ENCODE measurements at regions of chr4 and their contacts with region 1.

Region 1: DNA sequence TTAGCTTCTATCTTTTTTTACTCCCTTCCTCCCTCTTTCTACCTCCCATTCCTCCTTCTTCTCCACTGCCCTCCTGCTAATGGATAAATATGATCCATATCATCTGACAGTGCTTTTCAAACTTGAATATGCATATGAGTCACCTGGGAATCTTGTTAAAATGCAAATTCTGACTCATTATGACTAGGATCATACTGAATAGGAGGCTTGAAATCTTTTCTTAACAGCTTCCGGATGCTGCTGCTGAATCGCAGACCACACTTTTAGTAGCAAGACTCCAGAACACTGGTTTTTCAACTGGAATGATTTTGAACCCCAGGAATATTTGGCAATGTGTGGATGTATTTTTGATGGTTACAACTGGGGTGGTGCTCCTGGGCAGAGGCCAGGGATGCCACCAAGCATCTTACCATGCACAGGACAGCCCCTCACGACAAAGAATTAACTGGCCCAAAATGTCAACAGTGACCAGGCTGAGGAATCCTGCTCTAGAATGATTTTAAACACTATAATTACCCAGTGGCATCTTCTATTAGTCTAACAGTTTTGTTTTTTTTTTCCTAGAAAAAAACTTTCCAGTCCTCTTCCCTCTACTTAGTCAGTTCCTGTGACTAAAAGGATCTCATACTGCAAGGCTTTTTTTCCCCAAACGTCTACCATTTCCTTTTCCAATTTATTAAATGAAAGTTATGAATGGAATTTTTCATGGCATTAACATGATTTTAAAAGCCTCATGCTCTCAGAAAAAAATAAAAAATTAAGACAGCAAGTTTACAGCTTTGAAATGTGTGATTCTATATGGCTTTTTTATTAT is 10.6 kb upstream of the PYURF start:
- DNase-seq: no peak
- H3K4me3 ChIP-seq: no peak overlapping the region
- H3K27ac ChIP-seq: no peak overlapping the region
- H3K4me1 ChIP-seq: peaks cover 0 to 6% (median under 1%) of the 10 kb centered on the region in 4 donors
- H3K27me3 ChIP-seq: no peaks in the 10 kb centered on the region
- CTCF ChIP-seq: no peak
- EP300 ChIP-seq: no peak
- POLR2A ChIP-seq: no peak

Region 2: GRCh38 chr4:88341227-88342192 is 192.6 kb before region 1 on chr4:
- intact Hi-C with region 1: no loop called
- DNase-seq: no peak
- H3K4me3 ChIP-seq: no peak overlapping the region
- H3K27ac ChIP-seq: peak overlapping the region; percentile 34 to 57 (median 43)
- H3K4me1 ChIP-seq: peaks cover 11 to 22% (median 16%) of the 10 kb centered on the region in 4 donors
- H3K27me3 ChIP-seq: no peaks in the 10 kb centered on the region
- CTCF ChIP-seq: no peak
- EP300 ChIP-seq: no peak
- POLR2A ChIP-seq: no peak

Region 3: DNA sequence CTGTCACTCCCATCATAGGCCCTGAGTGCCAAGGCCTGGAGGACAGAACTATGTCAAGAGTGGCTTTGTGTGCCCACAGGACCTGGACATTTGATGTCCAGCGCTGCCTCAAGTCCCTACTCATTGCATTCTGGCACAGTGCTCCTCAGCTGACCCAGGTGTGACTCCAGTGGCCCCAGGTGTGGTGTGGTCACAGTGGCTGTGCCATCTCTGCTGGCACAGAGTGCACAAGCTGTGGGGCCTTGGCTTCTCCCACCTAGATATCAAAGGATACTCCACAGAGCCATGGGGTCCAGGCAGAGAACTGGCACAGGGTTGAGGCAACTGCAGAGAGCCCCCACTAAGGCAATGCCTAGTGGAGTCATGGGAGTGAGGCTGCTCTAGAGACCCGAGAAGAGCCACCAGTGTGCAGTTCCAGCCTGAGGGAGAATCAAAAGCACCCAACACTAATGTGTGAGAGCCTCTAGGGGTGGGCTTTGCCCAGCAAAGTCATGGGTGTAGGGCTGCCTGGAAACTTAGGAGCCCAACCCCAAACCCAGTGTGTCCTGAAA is 36.2 kb before region 1 on chr4:
- intact Hi-C with region 1: no loop called
- DNase-seq: no peak
- H3K4me3 ChIP-seq: no peak overlapping the region
- H3K27ac ChIP-seq: no peak overlapping the region
- H3K4me1 ChIP-seq: no peaks in the 10 kb centered on the region
- H3K27me3 ChIP-seq: no peaks in the 10 kb centered on the region
- CTCF ChIP-seq: no peak
- EP300 ChIP-seq: no peak
- POLR2A ChIP-seq: no peak

Region 4: DNA sequence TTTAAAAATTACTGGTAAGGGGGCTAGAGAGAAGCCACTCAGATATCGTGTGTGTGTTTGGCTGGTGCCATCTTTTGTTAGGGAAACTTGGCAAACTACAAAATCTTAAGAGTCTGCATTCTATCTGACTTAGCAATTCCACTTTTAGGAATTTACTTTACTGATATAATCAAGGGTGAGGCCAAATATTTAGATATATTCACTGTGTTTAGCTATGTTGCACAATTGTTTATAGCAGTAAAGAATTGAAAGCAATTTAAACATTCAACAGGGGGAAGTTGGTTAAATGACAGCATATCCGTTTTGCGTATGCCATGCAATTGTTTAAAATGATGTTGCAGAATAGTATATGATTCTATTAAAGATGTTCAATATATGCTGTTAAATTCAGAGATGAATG is 51.8 kb after region 1 on chr4:
- intact Hi-C with region 1: loop called (anchors 5 kb)
- DNase-seq: no peak
- H3K4me3 ChIP-seq: no peak overlapping the region
- H3K27ac ChIP-seq: no peak overlapping the region
- H3K4me1 ChIP-seq: peaks cover 3 to 18% (median 8%) of the 10 kb centered on the region in 4 donors
- H3K27me3 ChIP-seq: no peaks in the 10 kb centered on the region
- CTCF ChIP-seq: no peak
- EP300 ChIP-seq: no peak
- POLR2A ChIP-seq: no peak

Region 5: DNA sequence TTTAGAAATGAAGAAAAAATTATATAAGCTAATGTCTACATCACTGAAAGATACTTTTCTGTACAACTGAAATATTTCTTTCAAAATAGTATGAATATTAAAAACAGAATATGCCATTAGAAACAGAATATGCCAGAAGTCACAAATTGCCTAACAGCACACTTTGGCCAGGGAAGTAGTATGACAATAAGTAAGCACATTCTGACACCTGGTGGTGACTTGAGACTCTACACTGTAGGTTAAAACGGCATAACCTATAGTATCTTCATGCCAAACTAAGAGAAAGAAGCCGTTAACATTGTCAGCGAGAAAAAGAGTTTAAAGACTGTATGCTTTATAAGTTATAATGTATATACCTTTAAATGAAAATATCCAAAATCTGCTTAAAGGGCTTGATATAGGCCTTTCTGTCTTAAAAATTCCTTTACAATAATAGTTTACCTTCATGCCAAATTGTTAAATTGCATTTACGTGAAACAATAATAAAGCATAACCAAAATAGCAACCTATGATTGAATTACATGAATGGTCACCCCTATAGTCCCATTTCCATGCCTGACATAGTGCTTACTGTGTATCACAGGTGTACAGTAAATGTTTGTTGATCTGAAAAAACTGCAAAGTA is 490.0 kb after region 1 on chr4:
- intact Hi-C with region 1: loop called (anchors 10 kb)
- DNase-seq: no peak
- H3K4me3 ChIP-seq: no peak overlapping the region
- H3K27ac ChIP-seq: no peak overlapping the region
- H3K4me1 ChIP-seq: peaks cover 0 to 8% (median 2%) of the 10 kb centered on the region in 4 donors
- H3K27me3 ChIP-seq: no peaks in the 10 kb centered on the region
- CTCF ChIP-seq: peak; percentile 84 to 91 (median 88)
- EP300 ChIP-seq: no peak
- POLR2A ChIP-seq: no peak

Measured in esophagus muscularis mucosa (tissue), 4 donors.